Activated CD4-positive, alpha-beta T cell treated with anti-CD3 and anti-CD28 coated beads, Interleukin-2, amount 10 ng/mL, durations not matched to agents 24 days and 14 days (primary cell): ENCODE measurements at regions of chr1 and their contacts with region 1.

Region 1: DNA sequence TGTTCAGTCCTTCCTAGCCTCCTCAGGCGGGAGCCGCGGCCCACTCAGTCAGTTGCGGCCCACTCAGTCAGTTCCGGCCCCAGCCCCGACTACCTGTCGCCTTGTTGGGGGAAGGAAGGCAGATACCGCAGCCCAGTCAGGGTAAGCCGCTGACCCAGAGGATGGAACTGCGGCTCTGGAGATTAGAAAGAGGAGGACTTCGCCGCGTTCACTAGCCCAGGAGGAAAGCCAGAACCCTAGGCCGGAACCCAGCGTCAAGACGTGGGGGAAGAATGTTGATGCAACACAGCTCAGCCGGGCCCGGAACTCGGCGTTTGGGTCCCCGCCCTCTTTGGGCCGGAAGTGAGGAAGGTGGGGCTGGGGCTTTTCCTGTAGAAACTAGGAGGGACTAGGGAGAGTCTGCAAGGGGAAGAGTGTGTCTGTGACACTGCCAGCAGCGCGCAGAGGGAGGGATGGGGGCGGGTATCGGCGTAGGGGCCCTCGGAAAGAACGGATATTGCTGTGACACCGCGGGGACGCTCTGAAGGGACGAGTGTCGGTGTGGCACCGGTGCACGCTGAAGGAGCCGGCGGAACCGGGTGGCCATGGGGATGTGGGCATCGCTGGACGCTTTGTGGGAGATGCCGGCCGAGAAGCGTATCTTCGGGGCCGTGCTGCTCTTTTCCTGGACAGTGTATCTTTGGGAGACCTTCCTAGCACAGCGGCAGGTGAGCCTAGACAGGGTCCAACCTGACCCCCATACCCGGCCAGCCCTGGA is at the start of gene ZMPSTE24:
- DNase-seq: peak; percentile 98
- H3K4me3 Mint-ChIP-seq: peak within 1 kb of the TSS; percentile 87
- H3K27ac Mint-ChIP-seq: peak within 1 kb of the TSS; percentile 99
- H3K4me1 Mint-ChIP-seq: peaks cover 31% of the 10 kb centered on the region
- H3K27me3 Mint-ChIP-seq: no peaks in the 10 kb centered on the region
- total RNA-seq, gene ZMPSTE24: 50.4 and 50.8 TPM in 2 replicates

Region 2: DNA sequence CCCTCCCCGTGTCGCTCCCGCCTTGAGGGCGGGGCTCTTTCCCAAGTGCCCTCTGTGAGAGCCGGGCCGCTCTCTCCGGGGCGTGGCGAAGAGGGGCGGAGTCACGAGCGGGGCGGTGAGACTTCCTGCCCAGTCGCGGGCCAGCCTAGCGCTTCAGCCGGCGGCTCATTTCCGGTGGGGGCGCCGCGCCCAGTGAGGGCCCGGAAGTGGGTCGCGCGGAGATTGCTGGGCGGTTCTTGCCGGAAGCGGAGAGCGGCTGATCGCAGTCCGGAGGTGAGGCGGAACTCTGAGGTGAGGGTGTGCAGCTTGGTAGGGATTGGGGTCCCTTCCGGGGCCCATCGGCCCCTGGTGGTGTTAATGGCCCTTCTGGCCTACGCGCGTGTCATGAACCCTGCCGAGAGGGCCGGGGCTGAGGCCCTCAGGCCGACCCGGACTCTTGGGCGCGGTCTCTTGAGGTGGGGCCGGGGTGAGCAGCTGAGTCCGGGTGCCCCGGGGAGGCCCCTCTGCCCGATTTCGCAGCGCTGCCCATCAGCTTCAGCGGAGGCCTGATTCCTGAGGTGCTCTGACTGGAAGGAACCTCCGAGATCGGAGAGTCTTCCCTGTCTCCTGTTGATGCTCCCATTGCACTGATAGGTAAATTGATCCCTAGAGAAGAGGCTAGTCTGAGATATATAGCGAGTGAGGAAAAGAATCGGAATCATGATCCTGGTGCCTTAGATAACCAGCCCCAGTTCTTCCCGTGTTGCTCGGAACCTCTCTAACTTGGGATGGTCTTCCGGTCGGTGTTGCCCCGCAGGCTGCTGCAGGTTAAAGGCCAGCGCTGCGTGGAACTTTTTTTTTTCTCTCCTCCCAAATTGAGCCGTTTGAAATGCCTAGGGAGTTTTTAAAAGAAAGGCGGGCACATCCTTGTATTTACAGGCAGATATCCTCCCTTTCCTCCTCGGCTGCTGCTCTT is 217.1 kb before region 1 on chr1 and contains the start of gene CAP1:
- intact Hi-C with region 1: loop called (anchors 1 kb)
- DNase-seq: peak; percentile 100
- H3K4me3 Mint-ChIP-seq: peak within 1 kb of the TSS; percentile 93
- H3K27ac Mint-ChIP-seq: peak within 1 kb of the TSS; percentile 95
- H3K4me1 Mint-ChIP-seq: peaks cover 60% of the 10 kb centered on the region
- H3K27me3 Mint-ChIP-seq: no peaks in the 10 kb centered on the region
- total RNA-seq, gene CAP1: 417 and 440 TPM in 2 replicates

Region 3: GRCh38 chr1:40232444-40232843 is 25.4 kb before region 1 on chr1:
- intact Hi-C with region 1: loop called (anchors 1 kb)
- DNase-seq: peak; percentile 94
- H3K4me3 Mint-ChIP-seq: peak overlapping the region; percentile 30
- H3K27ac Mint-ChIP-seq: peak overlapping the region; percentile 58
- H3K4me1 Mint-ChIP-seq: peaks cover 37% of the 10 kb centered on the region
- H3K27me3 Mint-ChIP-seq: no peaks in the 10 kb centered on the region

Region 4: GRCh38 chr1:40315239-40315794 is 57.5 kb after region 1 on chr1:
- intact Hi-C with region 1: loop called (anchors 1 kb)
- DNase-seq: peak; percentile 95
- H3K4me3 Mint-ChIP-seq: peak overlapping the region; percentile 80
- H3K27ac Mint-ChIP-seq: peak overlapping the region; percentile 41
- H3K4me1 Mint-ChIP-seq: peaks cover 47% of the 10 kb centered on the region
- H3K27me3 Mint-ChIP-seq: peaks cover 24% of the 10 kb centered on the region

Region 5: GRCh38 chr1:40385437-40386358 is 127.8 kb after region 1 on chr1:
- intact Hi-C with region 1: loop called (anchors 2 kb)
- DNase-seq: peak; percentile 93
- H3K4me3 Mint-ChIP-seq: peak overlapping the region; percentile 88
- H3K27ac Mint-ChIP-seq: peak overlapping the region; percentile 99
- H3K4me1 Mint-ChIP-seq: peaks cover 79% of the 10 kb centered on the region
- H3K27me3 Mint-ChIP-seq: no peaks in the 10 kb centered on the region